ENCODE measurements at regions of chr6 and their contacts with region 1.

Region 1: DNA sequence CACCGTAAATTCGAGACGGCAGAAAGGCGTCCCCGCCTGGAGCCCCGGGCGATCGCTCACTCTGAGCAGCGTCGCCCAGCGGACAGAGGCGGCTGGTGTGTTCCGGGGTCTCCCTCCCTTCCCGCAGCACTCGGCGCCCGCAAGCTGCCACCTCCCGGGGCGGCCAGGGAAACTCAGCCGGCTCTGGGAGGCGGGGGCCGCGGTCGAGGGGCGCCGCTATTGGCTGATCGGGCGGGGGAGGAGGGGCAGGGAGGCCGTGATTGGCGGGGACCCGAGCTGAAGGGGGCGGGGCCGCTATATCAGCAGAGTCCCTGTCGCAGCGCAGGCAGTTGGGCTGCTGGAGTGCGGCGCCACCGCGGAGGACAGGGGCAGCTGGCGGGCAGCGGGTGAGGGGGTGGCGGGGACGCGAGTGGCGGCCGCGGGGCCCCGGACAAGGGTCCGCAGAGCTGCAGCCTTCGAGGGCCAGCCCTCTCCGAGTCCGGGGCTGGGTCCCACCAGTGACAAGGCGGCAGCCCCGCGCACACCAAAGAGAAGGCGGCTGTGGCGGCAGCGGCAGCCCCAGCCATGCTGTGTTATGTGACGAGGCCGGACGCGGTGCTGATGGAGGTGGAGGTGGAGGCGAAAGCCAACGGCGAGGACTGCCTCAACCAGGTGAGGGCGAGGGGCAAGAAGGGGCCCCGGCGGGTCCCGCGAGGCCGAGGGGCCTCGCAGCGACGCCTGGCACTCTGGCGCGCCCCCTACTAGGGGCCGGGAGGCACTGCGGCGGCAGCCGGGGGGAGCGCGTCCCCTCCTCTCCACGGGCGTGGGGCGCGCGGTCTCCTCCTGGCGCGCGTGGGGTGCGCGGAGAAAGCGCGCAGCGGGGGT is at the start of gene MYLIP:
- DNase-seq: no peak
- H3K4me3 ChIP-seq: peak within 1 kb of the TSS; percentile 84
- H3K27me3 ChIP-seq: peaks cover 27% of the 10 kb centered on the region
- CTCF ChIP-seq: peak; percentile 61
- polyA plus RNA-seq, gene MYLIP: 5.0 and 6.5 TPM in 2 replicates

Region 2: DNA sequence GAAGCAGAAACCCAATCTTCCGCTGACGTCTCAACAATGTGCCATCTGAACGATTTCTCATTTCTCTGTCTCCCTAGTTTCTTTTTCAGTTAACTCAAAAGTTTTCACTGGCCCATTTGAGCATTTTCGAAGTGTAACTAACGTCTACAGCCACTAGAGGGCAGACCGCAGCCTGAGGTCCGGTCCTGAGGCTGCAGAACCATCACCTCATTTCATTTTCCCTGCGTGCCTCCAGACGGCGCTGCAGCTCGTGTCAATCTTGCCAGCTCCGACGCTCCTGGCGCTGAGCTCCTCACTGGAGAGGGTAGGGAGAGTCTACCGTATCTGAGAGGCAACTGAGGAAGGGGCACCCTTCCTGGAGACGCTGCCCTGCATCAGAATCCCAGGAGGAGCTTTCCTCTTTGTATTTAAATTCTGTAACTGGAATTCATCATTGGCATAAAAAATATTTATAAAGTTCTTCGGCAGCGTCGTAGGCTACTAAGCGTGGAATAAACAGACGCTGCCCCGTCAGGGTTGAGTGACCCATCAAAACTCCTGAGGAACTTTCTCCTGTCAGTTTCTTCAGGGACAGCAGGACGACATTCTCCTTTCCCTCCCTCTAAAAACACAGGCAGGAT is 437.6 kb before region 1 on chr6:
- CTCF ChIA-PET with region 1: interaction called, 11 read pairs
- POLR2A ChIA-PET with region 1: no interaction called
- DNase-seq: peak; percentile 10
- H3K4me3 ChIP-seq: peak overlapping the region; percentile 37
- H3K27me3 ChIP-seq: no peaks in the 10 kb centered on the region
- CTCF ChIP-seq: peak; percentile 100

Region 3: DNA sequence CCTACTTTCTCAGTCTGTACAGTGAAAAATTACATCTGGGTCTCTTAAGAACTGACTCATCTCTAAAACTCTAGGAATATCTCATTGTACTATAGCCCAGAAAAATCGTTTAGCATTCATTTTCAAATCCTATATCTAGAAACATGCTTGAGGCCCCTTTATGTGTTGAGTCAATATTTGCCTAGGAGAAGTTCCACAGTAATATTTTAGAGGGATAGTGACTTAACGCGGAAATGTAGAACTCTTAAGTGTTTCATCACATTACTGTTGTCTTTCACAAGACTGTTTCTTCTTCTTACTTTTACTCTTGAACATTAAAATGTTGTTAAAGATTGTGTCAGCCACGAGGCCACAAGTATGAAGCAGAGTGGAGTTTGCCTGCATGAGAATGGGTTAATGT is 23.1 kb before region 1 on chr6:
- CTCF ChIA-PET with region 1: no interaction called
- POLR2A ChIA-PET with region 1: interaction called, 10 read pairs
- DNase-seq: no peak
- H3K4me3 ChIP-seq: no peak overlapping the region
- H3K27me3 ChIP-seq: no peaks in the 10 kb centered on the region; the same call in 1 of the 2 replicates
- CTCF ChIP-seq: no peak

Region 4: GRCh38 chr6:16154904-16155303 is 25.9 kb after region 1 on chr6:
- CTCF ChIA-PET with region 1: interaction called, 4 read pairs
- POLR2A ChIA-PET with region 1: interaction called, 12 read pairs
- DNase-seq: no peak
- H3K4me3 ChIP-seq: no peak overlapping the region
- H3K27me3 ChIP-seq: peaks cover 11% of the 10 kb centered on the region
- CTCF ChIP-seq: no peak

Region 5: DNA sequence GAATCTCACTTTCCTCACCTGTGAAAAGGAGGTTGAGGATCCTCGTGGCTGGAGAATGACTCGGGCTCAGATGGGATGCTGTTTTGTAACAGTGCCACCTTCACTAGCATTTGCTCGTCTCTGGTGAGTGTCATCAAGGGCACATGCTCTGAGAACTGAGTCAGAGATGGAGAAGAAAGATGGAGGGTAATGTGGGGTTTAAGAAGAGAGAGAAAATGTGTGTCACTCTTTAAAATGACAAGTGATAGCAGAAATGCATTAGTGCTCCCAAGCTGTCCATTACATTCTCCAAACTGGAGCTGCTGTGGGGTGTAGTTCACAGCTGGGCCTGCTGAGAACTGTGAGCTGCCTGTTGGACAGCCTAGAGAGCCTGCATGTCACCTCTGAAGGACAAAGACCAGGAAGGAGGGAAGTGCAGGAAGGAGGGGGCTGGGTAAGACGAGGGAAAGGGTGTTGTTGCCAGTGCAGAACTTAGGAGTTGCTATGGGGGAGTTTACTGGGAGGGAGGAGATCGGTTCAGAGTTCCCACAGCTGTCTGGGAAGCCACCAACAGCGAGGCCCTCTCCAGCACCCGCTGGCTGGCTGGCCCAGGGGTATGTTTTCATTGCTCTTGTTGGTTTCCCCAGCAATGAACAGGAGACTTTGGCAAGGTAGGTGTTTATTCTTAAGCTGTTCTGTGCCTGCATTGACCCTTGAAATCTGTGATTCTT is 129.2 kb after region 1 on chr6:
- CTCF ChIA-PET with region 1: no interaction called
- POLR2A ChIA-PET with region 1: no interaction called
- DNase-seq: no peak
- H3K4me3 ChIP-seq: no peak overlapping the region
- H3K27me3 ChIP-seq: no peaks in the 10 kb centered on the region
- CTCF ChIP-seq: no peak

Measured in BJ (cell line).